ENCODE measurements at regions of chr7 and their contacts with region 1.

Region 1: GRCh38 chr7:113405296-113406056 is 287.1 kb upstream of the SMIM30 start:
- DNase-seq: no peak
- H3K4me3 ChIP-seq: no peak overlapping the region
- H3K27ac ChIP-seq: no peak overlapping the region
- H3K4me1 ChIP-seq: no peaks in the 10 kb centered on the region
- CTCF ChIP-seq: no peak

Region 2: GRCh38 chr7:112556633-112557032 is 848.8 kb before region 1 on chr7:
- CTCF ChIA-PET with region 1: no interaction called
- POLR2A ChIA-PET with region 1: no interaction called
- intact Hi-C with region 1: loop called (anchors 5 kb)
- DNase-seq: peak; percentile 24
- H3K4me3 ChIP-seq: no peak overlapping the region
- H3K27ac ChIP-seq: no peak overlapping the region
- H3K4me1 ChIP-seq: no peaks in the 10 kb centered on the region
- CTCF ChIP-seq: no peak

Measured in OCI-LY7 (cell line).